PC-9 (cell line): ENCODE measurements at regions of chr1 and their contacts with region 1.

Region 1: GRCh38 chr1:234499119-234499942 is 20.4 kb upstream of the TARBP1 start:
- DNase-seq: peak; percentile 75 to 92
- H3K4me3 ChIP-seq: peak overlapping the region; percentile 16; the same call in 1 of the 2 replicates
- H3K27ac ChIP-seq: peak overlapping the region; percentile 85
- H3K4me1 ChIP-seq: peaks cover 90% of the 10 kb centered on the region
- H3K27me3 ChIP-seq: no peaks in the 10 kb centered on the region
- CTCF ChIP-seq: peak; percentile 95

Region 2: DNA sequence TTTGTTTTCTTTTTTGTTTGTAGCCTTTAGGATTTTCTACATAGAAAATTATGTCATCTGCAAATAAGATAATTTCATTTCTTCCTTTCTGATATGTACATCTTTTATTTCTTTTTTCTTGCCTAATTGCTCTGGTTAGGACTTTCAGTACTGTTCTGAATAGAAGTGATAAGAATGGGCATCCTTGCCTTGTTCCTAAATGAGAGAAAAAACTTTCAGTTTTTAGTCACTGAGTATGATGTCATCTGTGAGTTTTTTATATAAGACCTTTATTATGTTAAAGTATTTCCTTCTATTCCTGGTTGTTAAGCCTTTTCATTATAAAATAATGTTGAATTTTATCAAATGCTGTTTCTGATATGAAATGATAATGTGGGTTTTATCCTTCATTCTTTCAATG is 670.9 kb before region 1 on chr1:
- CTCF ChIA-PET with region 1: no interaction called
- POLR2A ChIA-PET with region 1: no interaction called
- intact Hi-C with region 1: no loop called
- DNase-seq: no peak
- H3K4me3 ChIP-seq: no peak overlapping the region
- H3K27ac ChIP-seq: no peak overlapping the region
- H3K4me1 ChIP-seq: no peaks in the 10 kb centered on the region
- H3K27me3 ChIP-seq: no peaks in the 10 kb centered on the region
- CTCF ChIP-seq: no peak

Region 3: DNA sequence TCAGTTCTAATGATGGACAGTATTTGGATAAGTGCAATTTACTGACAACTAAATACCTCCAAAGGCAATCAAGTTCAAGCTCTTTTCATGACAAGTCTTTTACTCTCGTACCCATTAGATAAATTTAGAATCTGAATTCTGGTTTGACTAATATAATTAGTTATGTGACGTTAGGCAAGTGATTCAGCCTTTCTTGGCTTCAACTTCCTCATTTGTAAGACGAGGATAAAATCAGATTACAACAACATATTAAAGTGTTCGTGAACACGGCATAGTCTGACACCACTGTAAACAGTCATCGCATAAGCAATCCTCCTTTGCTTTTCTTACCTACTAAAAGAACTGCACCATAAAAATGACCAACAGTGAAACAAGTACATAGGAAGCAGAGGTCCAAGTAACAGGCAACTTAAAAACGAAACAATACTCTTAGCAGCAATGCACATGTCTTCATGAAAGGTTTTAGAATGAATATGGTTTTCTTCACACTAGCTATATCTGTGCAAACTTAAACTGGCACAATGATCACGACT is 100.4 kb before region 1 on chr1:
- CTCF ChIA-PET with region 1: no interaction called
- POLR2A ChIA-PET with region 1: no interaction called
- intact Hi-C with region 1: no loop called
- DNase-seq: no peak
- H3K4me3 ChIP-seq: no peak overlapping the region
- H3K27ac ChIP-seq: 0 out of 2 replicates have a peak overlapping the region, but pooled peaks have one; percentile 36
- H3K4me1 ChIP-seq: no peaks in the 10 kb centered on the region
- H3K27me3 ChIP-seq: no peaks in the 10 kb centered on the region
- CTCF ChIP-seq: no peak

Region 4: GRCh38 chr1:234564642-234565037 is 65.3 kb after region 1 on chr1:
- CTCF ChIA-PET with region 1: interaction called, 3 read pairs
- POLR2A ChIA-PET with region 1: interaction called, 7 read pairs
- intact Hi-C with region 1: loop called (anchors 1 kb)
- DNase-seq: peak; percentile 88 to 99
- H3K4me3 ChIP-seq: no peak overlapping the region
- H3K27ac ChIP-seq: peak overlapping the region; percentile 90
- H3K4me1 ChIP-seq: peaks cover 45% of the 10 kb centered on the region
- H3K27me3 ChIP-seq: no peaks in the 10 kb centered on the region
- CTCF ChIP-seq: no peak

Region 5: GRCh38 chr1:234722904-234723720 is 223.8 kb after region 1 on chr1:
- CTCF ChIA-PET with region 1: interaction called, 4 read pairs
- POLR2A ChIA-PET with region 1: interaction called, 19 read pairs
- intact Hi-C with region 1: loop called (anchors 1 kb)
- DNase-seq: peak in 1 of 2 experiments; percentile 90
- H3K4me3 ChIP-seq: peak overlapping the region; percentile 53
- H3K27ac ChIP-seq: peak overlapping the region; percentile 97
- H3K4me1 ChIP-seq: peaks cover 71% of the 10 kb centered on the region
- H3K27me3 ChIP-seq: no peaks in the 10 kb centered on the region
- CTCF ChIP-seq: no peak

Region 6: GRCh38 chr1:234912548-234913277 is 413.4 kb after region 1 on chr1:
- CTCF ChIA-PET with region 1: no interaction called
- POLR2A ChIA-PET with region 1: interaction called, 3 read pairs
- intact Hi-C with region 1: loop called (anchors 2 kb)
- DNase-seq: peak in 1 of 2 experiments; percentile 89
- H3K4me3 ChIP-seq: no peak overlapping the region
- H3K27ac ChIP-seq: no peak overlapping the region
- H3K4me1 ChIP-seq: no peaks in the 10 kb centered on the region
- H3K27me3 ChIP-seq: no peaks in the 10 kb centered on the region
- CTCF ChIP-seq: no peak

Region 7: GRCh38 chr1:234978397-234979295 is 479.3 kb after region 1 on chr1:
- CTCF ChIA-PET with region 1: interaction called, 3 read pairs
- POLR2A ChIA-PET with region 1: interaction called, 5 read pairs
- intact Hi-C with region 1: loop called (anchors 1 kb)
- DNase-seq: peak; percentile 45 to 93
- H3K4me3 ChIP-seq: peak overlapping the region; percentile 30; the same call in 1 of the 2 replicates
- H3K27ac ChIP-seq: peak overlapping the region; percentile 99
- H3K4me1 ChIP-seq: peaks cover 99% of the 10 kb centered on the region
- H3K27me3 ChIP-seq: no peaks in the 10 kb centered on the region
- CTCF ChIP-seq: no peak

Region 8: GRCh38 chr1:235075188-235075926 is 576.0 kb after region 1 on chr1:
- CTCF ChIA-PET with region 1: interaction called, 5 read pairs
- POLR2A ChIA-PET with region 1: interaction called, 18 read pairs
- intact Hi-C with region 1: loop called (anchors 1 kb)
- DNase-seq: peak; percentile 66 to 95
- H3K4me3 ChIP-seq: peak overlapping the region; percentile 61
- H3K27ac ChIP-seq: peak overlapping the region; percentile 100
- H3K4me1 ChIP-seq: peaks cover 94% of the 10 kb centered on the region
- H3K27me3 ChIP-seq: no peaks in the 10 kb centered on the region
- CTCF ChIP-seq: no peak